Prostate gland (tissue), 2 donors: ENCODE measurements at regions of chr16 and their contacts with region 1.

Region 1: GRCh38 chr16:30378236-30379204 is 3.8 kb downstream of the SEPTIN1 start:
- DNase-seq: peak; percentile 99
- H3K4me3 ChIP-seq: peak overlapping the region; percentile 56 to 62
- H3K27ac ChIP-seq: peak overlapping the region; percentile 98 to 100
- H3K4me1 ChIP-seq: peaks cover 3% of the 10 kb centered on the region
- H3K27me3 ChIP-seq: no peaks in the 10 kb centered on the region
- CTCF ChIP-seq: peak in 2 of 4 experiments; percentile 24 to 32
- POLR2A ChIP-seq: peak; percentile 90

Region 2: GRCh38 chr16:30395155-30395991 is 16.9 kb after region 1 on chr16 and contains the start of gene ZNF48:
- intact Hi-C with region 1: loop called (anchors 2 kb)
- DNase-seq: peak; percentile 84
- H3K4me3 ChIP-seq: peak within 1 kb of the TSS; percentile 77 to 81
- H3K27ac ChIP-seq: peak within 1 kb of the TSS; percentile 72 to 74
- H3K4me1 ChIP-seq: peaks cover 8% of the 10 kb centered on the region
- H3K27me3 ChIP-seq: no peaks in the 10 kb centered on the region
- CTCF ChIP-seq: peak in 2 of 4 experiments; percentile 34 to 63
- POLR2A ChIP-seq: peak; percentile 32
- total RNA-seq, gene ZNF48: 11.9 to 12.2 TPM

Region 3: DNA sequence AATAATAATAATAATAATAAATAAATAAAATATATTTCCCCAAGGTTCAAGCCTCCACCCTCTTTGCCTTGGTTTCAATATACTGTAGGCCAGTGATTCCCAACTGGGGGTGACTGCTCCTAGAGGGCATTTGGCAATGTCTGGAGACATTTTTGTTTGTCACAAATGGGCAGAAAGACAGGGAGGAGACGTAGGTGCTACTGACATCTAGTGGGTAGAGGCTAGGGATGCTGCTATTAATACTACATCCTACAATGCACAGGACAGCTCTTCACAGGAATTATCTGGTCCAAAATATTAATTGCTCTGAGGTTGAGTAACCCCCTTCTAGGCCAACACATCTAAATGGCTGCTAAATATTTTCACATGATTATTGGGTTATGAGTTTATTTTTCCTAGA is 259.4 kb after region 1 on chr16:
- intact Hi-C with region 1: no loop called
- DNase-seq: no peak
- H3K4me3 ChIP-seq: no peak overlapping the region
- H3K27ac ChIP-seq: no peak overlapping the region
- H3K4me1 ChIP-seq: no peaks in the 10 kb centered on the region
- H3K27me3 ChIP-seq: no peaks in the 10 kb centered on the region
- CTCF ChIP-seq: no peak
- POLR2A ChIP-seq: no peak